ENCODE measurements at regions of chr1 and their contacts with region 1.

Region 1: DNA sequence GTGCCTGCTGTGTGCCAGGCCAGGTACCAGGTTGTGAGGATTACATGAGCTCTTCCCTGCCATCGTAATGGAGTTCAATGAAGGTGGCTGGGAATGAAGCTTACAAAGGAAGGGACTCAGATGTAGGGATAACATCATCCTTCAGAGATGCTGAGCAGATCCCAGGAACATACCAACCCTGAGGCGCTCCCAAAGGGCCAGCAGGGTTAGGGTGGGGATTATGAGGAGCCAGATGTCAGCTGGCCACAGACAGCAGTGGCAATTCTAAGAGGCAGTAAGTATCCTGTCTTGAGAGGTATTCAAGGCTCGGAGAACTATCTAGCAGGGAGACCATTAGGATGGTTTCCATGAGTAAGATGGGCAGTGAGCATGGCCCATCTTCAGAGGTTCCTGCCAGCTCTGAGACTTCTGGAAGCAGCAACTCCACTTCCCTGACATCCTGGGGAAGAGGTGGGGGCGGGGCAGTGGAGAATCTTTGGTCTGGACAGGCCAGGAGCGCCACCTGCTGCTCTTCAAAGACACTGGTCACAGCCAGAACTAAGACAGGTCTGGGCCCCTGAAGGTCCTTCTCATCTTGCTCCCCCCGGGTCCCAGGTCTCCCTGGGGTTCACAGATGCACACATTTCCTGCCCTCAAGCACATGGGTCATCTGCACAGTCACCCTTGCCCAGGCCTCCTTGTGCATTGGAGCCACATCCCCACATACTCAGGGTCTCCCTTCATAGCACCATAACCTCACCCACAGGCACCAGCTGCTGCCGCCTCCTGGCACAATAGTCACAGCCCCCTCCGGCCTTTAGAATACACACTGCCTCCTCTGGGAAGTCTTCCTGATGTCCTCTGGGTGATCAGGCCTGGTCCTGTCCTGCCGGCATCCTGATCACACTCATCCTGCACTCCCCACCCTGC is 2.7 kb upstream of the SDC3 start:
- DNase-seq: peak; percentile 91
- H3K4me3 Mint-ChIP-seq: no peak overlapping the region
- H3K27ac Mint-ChIP-seq: no peak overlapping the region
- H3K4me1 Mint-ChIP-seq: peaks cover 15% of the 10 kb centered on the region
- H3K27me3 Mint-ChIP-seq: no peaks in the 10 kb centered on the region
- CTCF ChIP-seq: peak; percentile 85

Region 2: DNA sequence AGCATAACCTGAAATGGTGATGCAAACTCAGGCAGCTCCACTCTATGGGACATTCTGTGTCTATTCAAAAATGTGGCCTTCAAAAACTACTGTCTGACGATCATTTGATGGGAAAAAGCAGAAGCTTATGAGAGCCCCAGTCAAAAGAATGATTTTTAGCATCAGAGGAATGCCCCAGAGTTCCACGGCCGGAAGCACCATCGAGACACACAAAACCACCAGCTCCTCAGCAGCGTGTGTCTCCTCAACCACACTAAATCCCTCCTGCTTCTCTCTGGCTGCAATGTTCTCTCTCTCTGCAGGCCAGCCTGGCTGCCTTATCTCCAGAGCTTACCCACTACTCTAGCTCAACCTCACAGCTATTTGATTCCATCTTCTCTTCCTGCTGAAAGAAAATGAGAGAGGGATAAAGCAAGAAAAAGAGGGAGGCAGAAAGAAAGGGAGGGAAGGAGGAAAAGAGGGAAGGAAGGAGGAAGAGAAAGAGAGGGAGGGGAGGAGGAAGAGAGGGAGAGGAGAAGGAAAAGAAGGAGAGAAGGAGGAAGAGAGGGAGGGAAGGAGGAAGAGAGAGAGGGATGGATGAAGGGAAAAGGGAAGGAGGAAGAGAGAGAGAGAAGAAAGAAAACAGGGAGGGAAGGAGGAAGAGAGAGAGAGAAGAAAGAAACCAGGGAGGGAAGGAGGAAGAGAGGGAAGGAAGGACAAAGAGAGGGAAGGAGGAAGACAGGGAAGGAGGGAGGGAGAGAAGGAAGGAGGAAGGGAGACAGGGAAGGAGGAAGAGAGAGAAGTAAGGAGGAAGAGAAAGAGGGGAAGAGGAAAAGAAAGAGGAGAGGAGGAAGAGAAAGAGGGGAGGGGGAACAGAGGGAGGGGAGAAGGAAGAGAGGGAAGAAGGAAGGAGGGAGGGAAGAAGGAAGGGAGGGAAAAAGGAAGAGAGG is 120.2 kb before region 1 on chr1:
- CTCF ChIA-PET with region 1: interaction called, 60 read pairs
- POLR2A ChIA-PET with region 1: interaction called, 32 read pairs
- intact Hi-C with region 1: no loop called
- DNase-seq: no peak
- H3K4me3 Mint-ChIP-seq: no peak overlapping the region
- H3K27ac Mint-ChIP-seq: peak overlapping the region; percentile 100
- H3K4me1 Mint-ChIP-seq: peaks cover 48% of the 10 kb centered on the region
- H3K27me3 Mint-ChIP-seq: no peaks in the 10 kb centered on the region
- CTCF ChIP-seq: no peak

Region 3: GRCh38 chr1:30823969-30824735 is 87.1 kb before region 1 on chr1:
- CTCF ChIA-PET with region 1: interaction called, 6 read pairs
- POLR2A ChIA-PET with region 1: interaction called, 11 read pairs
- intact Hi-C with region 1: no loop called
- DNase-seq: peak; percentile 99
- H3K4me3 Mint-ChIP-seq: peak overlapping the region; percentile 73
- H3K27ac Mint-ChIP-seq: peak overlapping the region; percentile 89
- H3K4me1 Mint-ChIP-seq: peaks cover 26% of the 10 kb centered on the region
- H3K27me3 Mint-ChIP-seq: no peaks in the 10 kb centered on the region
- CTCF ChIP-seq: no peak